ENCODE measurements at regions of chr6 and their contacts with region 1.

Region 1: GRCh38 chr6:6315660-6316059 is 4.8 kb downstream of the F13A1 start:
- DNase-seq: peak in 1 of 2 donors; percentile 40
- ATAC-seq: peak in 1 of 8 donors; percentile 44
- H3K4me3 ChIP-seq: peak overlapping the region in 1 of 10 donors; percentile 56
- H3K27ac ChIP-seq: peak overlapping the region in 1 of 10 donors; percentile 28
- H3K4me1 ChIP-seq: peaks cover 0 to 45% (median 11%) of the 10 kb centered on the region in 9 donors
- H3K27me3 ChIP-seq: peaks cover 0 to 15% (median 9%) of the 10 kb centered on the region in 7 donors
- CTCF ChIP-seq: peak; percentile 72 to 89 (median 86)

Region 2: GRCh38 chr6:4415576-4415975 is 1900.1 kb before region 1 on chr6:
- intact Hi-C with region 1: loop called in 1 of 10 experiments (anchors 5 kb)
- DNase-seq: no peak
- ATAC-seq: no peak
- H3K4me3 ChIP-seq: no peak overlapping the region
- H3K27ac ChIP-seq: no peak overlapping the region
- H3K4me1 ChIP-seq: peaks cover 0 to 6% (median 0%) of the 10 kb centered on the region in 9 donors
- H3K27me3 ChIP-seq: no peaks in the 10 kb centered on the region
- CTCF ChIP-seq: no peak

Region 3: DNA sequence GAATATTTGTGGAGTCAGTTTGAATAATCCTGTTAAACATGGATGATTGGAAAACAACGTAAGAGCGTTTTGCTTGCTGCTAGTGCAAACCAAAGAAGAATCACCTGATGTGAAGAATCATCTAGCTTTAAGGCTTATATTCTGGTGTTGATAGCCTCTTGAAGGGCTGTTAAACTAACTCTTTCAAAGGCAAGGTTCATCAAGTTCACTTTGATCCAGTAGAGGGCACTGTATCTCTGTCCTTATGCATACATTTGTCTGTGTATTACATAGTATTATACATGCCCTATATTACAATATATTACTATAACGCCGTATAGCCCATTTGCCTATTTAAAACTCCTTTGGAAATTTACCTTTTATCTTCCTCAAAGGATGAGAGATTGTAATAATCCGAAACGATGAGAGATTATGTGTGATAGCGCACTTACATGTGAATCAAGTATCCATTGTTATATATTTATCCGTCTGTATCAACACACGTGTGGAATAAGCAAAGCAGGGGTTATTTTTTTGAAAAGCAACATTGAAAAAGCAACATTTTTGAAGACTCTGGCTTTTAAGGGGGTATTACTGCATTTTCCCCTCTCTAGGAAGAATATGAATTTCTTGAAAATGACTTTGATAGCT is 258.1 kb before region 1 on chr6:
- intact Hi-C with region 1: loop called in 5 of 10 experiments (anchors 5 to 10 kb)
- DNase-seq: peak in 1 of 2 donors; percentile 42
- ATAC-seq: peak in 7 of 8 donors; percentile 51 to 70 (median 62)
- H3K4me3 ChIP-seq: no peak overlapping the region
- H3K27ac ChIP-seq: no peak overlapping the region
- H3K4me1 ChIP-seq: no peaks in the 10 kb centered on the region
- H3K27me3 ChIP-seq: peaks cover 0 to 25% (median 7%) of the 10 kb centered on the region in 7 donors
- CTCF ChIP-seq: peak; percentile 32 to 82 (median 71)

Region 4: DNA sequence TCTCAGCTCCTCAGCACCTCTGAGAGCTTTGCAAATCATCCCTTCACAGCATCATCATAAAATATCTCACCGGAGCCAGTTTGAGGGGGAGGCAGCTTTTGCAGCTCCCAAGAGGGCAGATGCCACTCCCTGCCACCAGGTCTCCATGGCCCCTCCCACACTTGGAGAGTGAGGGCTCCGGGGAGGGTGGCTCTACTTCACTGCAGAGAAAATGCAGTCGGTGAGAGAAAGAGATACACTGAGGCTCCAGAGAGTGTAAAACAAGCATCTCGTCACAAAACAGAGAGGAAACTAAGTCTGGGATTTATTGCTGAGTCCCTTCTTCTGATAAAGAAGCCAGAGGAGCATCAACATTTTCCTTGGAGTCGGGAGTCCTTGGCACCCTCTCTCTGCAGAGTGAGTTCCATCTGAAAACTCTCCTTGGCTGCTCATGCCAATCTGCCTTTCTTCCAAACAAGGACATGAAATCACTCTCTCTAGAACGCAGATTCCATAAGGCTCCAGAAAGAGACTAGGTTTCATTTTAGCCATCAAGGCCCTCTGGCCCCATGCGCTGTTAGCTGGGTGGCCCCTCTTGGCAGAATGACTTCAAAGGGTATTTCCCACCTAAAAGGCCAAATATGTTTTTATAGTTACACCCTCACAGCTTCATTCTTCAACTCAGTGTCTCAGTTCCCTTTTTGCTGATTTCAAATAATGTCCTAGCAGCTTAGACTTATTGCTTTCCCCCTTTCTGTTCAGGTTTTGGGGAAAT is 75.4 kb after region 1 on chr6:
- intact Hi-C with region 1: loop called in 1 of 10 experiments (anchors 10 kb)
- DNase-seq: no peak
- ATAC-seq: no peak
- H3K4me3 ChIP-seq: no peak overlapping the region
- H3K27ac ChIP-seq: peak overlapping the region in 1 of 10 donors; percentile 16
- H3K4me1 ChIP-seq: peaks cover 0 to 42% (median 5%) of the 10 kb centered on the region in 9 donors
- H3K27me3 ChIP-seq: no peaks in the 10 kb centered on the region
- CTCF ChIP-seq: no peak

Region 5: GRCh38 chr6:6452002-6452401 is 136.3 kb after region 1 on chr6:
- intact Hi-C with region 1: loop called in 1 of 10 experiments (anchors 5 kb)
- DNase-seq: peak in 1 of 2 donors; percentile 19
- ATAC-seq: peak; percentile 55 to 97 (median 88)
- H3K4me3 ChIP-seq: no peak overlapping the region
- H3K27ac ChIP-seq: peak overlapping the region in 1 of 10 donors; percentile 16
- H3K4me1 ChIP-seq: peaks cover 0 to 26% (median 12%) of the 10 kb centered on the region in 9 donors
- H3K27me3 ChIP-seq: no peaks in the 10 kb centered on the region
- CTCF ChIP-seq: no peak

Region 6: DNA sequence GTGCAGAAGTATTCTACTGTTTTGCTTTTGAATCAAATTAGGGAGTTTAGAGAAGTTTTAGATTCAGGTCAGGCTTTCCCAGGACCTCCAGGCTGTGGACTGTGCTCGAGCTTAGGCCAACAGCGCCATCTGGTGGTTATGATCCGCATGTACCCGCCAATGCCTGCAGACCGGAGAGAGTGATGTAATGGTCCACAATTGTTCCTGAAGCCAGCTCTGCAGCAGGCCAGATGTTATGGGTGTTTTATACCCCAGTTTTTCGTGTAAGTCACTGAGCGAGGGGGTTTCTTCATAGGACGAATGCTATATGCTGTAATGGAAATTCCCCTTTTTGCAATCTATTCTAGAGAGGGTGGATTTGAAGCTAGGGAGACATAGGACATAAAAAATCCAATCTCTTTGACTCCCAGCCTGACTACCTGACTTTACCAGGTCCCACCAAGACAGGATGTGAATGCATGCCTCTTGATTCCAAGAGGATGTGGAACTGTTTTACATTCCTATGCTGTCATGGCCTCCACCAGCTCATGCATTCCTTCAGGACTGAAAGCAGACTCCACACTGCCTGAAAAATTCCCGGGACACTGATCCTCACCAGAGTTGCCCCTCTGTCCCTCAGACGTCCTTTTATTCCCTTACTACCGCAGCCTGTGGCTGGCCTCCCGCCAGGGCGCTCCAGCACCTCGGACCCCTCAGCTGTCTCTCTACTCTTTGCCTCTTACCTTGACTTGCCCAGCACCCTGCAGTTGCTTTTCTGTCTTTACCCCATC is 231.6 kb after region 1 on chr6:
- intact Hi-C with region 1: loop called in 3 of 10 experiments (anchors 10 kb)
- DNase-seq: peak; percentile 86 to 92
- ATAC-seq: peak; percentile 94 to 98 (median 98)
- H3K4me3 ChIP-seq: peak overlapping the region in 9 of 10 donors; percentile 36 to 68 (median 54)
- H3K27ac ChIP-seq: peak overlapping the region in 6 of 10 donors; percentile 8 to 75 (median 29)
- H3K4me1 ChIP-seq: peaks cover 0 to 20% (median 12%) of the 10 kb centered on the region in 9 donors
- H3K27me3 ChIP-seq: peaks cover 0 to 31% (median 10%) of the 10 kb centered on the region in 7 donors
- CTCF ChIP-seq: peak; percentile 93 to 98 (median 95)